Calu3 (cell line): ENCODE measurements at regions of chr6 and their contacts with region 1.

Region 1: DNA sequence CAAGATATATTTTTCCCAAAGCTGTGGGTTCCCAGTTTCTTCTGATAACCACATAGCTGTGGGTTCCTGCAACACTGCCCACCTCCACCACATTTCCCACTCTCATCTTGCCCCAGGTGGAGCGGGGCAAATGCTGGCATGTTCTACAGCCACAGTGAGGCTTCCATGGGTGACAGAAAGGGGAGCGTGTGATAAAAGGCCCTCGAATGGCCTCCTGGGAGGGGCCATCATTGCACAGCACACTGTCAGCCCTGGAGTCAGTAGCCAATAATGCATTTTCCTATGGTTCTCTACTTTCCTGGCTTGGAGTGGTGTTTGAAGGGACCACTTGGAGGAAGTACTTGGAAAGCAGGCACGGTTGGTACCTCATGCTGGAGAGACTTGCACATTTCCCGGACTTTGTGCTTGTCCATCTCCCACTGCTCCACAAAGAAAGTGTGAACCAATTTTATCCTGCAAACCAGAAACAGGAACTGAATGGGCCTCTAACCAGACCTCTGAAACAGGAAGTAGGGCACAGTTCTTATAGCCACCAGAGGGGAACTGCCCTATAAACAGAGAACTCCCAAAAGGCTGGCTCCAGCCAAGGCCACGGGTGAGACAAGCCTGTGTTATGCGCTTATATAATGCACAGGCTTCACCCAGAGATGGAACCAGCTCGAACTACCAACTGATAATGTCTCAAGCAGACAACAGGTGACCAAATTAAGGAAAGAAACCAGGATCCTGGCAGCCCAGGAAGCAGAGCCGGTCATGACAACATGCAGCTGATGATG is 8.6 kb downstream of the MAP3K5 start:
- DNase-seq: no peak
- H3K4me3 Mint-ChIP-seq: peak overlapping the region; percentile 55
- H3K27ac Mint-ChIP-seq: peak overlapping the region; percentile 66
- H3K4me1 Mint-ChIP-seq: peaks cover 31% of the 10 kb centered on the region
- H3K27me3 Mint-ChIP-seq: no peaks in the 10 kb centered on the region
- CTCF ChIP-seq: no peak

Region 2: GRCh38 chr6:136103763-136104311 is 679.8 kb before region 1 on chr6:
- CTCF ChIA-PET with region 1: no interaction called
- intact Hi-C with region 1: no loop called
- DNase-seq: no peak
- H3K4me3 Mint-ChIP-seq: no peak overlapping the region
- H3K27ac Mint-ChIP-seq: no peak overlapping the region
- H3K4me1 Mint-ChIP-seq: peaks cover 14% of the 10 kb centered on the region
- H3K27me3 Mint-ChIP-seq: no peaks in the 10 kb centered on the region
- CTCF ChIP-seq: no peak

Region 3: GRCh38 chr6:136677831-136678230 is 105.9 kb before region 1 on chr6:
- CTCF ChIA-PET with region 1: no interaction called
- intact Hi-C with region 1: loop called (anchors 5 kb)
- DNase-seq: peak; percentile 60
- H3K4me3 Mint-ChIP-seq: no peak overlapping the region
- H3K27ac Mint-ChIP-seq: peak overlapping the region; percentile 71
- H3K4me1 Mint-ChIP-seq: peaks cover 26% of the 10 kb centered on the region
- H3K27me3 Mint-ChIP-seq: no peaks in the 10 kb centered on the region
- CTCF ChIP-seq: no peak

Region 4: GRCh38 chr6:136740050-136740974 is 43.4 kb before region 1 on chr6:
- CTCF ChIA-PET with region 1: no interaction called
- intact Hi-C with region 1: loop called (anchors 5 kb)
- DNase-seq: no peak
- H3K4me3 Mint-ChIP-seq: no peak overlapping the region
- H3K27ac Mint-ChIP-seq: no peak overlapping the region
- H3K4me1 Mint-ChIP-seq: peaks cover 14% of the 10 kb centered on the region
- H3K27me3 Mint-ChIP-seq: no peaks in the 10 kb centered on the region
- CTCF ChIP-seq: no peak